Caco-2 (cell line): ENCODE measurements at regions of chr10 and their contacts with region 1.

Region 1: DNA sequence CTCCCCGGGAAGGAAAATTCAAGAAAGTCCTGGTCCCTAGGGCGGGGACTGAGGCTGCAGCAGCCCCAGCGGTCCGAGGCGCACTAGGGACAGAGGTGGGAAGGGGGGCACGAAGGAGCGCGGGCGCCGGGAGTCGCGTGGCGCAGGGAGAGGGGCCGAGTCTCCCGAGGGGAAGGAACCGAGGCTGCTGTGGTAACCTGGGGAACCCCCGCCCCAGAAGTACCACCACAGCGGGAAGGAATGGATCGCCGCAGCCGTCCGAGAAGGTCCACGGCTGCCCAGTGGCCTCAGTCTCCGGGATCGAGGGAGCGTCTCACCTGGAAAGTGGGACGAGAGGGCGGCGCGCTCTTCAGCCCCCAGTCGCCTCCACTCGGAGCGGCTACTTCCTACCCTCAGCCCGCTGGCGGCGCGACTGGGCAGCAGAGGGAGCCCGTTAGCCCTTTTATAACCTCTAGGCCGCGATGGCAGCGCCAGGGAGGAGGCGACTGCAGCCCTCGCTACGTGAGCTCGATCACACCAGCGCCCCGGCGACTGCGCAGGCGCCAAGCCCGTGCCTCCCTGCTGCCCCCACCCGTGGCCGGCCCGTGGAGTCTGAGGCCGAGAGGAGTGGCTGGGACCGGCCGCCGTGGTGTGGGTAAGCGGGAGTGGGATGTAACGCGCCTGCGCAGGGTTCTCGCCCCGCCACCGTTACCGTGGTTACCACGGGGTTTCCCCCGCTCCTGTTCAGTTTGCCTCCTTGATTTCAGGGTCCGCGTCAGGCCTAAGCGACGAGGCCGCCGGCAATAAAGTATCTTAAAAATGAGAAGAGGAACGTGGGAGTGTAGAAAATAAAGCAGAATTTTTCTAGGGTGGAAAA is at the start of gene P4HA1:
- DNase-seq: peak; percentile 99
- H3K4me3 ChIP-seq: peak within 1 kb of the TSS; percentile 70
- H3K4me3 Mint-ChIP-seq: peak within 1 kb of the TSS; percentile 98
- H3K27ac Mint-ChIP-seq: peak within 1 kb of the TSS; percentile 96
- H3K4me1 ChIP-seq: peaks cover 16% of the 10 kb centered on the region; the same call in 1 of the 2 replicates
- H3K4me1 Mint-ChIP-seq: peaks cover 14% of the 10 kb centered on the region
- H3K27me3 ChIP-seq: no peaks in the 10 kb centered on the region
- H3K27me3 Mint-ChIP-seq: no peaks in the 10 kb centered on the region
- CTCF ChIP-seq: peak; percentile 47 to 91
- total RNA-seq, gene P4HA1: 44.3 and 46.5 TPM in 2 replicates

Region 2: GRCh38 chr10:72997099-72997498 is 99.6 kb before region 1 on chr10:
- CTCF ChIA-PET with region 1: no interaction called
- POLR2A ChIA-PET with region 1: no interaction called
- intact Hi-C with region 1: no loop called
- DNase-seq: no peak
- H3K4me3 ChIP-seq: no peak overlapping the region
- H3K4me3 Mint-ChIP-seq: no peak overlapping the region
- H3K27ac Mint-ChIP-seq: no peak overlapping the region
- H3K4me1 ChIP-seq: no peaks in the 10 kb centered on the region
- H3K4me1 Mint-ChIP-seq: no peaks in the 10 kb centered on the region
- H3K27me3 ChIP-seq: no peaks in the 10 kb centered on the region
- H3K27me3 Mint-ChIP-seq: no peaks in the 10 kb centered on the region
- CTCF ChIP-seq: no peak

Region 3: DNA sequence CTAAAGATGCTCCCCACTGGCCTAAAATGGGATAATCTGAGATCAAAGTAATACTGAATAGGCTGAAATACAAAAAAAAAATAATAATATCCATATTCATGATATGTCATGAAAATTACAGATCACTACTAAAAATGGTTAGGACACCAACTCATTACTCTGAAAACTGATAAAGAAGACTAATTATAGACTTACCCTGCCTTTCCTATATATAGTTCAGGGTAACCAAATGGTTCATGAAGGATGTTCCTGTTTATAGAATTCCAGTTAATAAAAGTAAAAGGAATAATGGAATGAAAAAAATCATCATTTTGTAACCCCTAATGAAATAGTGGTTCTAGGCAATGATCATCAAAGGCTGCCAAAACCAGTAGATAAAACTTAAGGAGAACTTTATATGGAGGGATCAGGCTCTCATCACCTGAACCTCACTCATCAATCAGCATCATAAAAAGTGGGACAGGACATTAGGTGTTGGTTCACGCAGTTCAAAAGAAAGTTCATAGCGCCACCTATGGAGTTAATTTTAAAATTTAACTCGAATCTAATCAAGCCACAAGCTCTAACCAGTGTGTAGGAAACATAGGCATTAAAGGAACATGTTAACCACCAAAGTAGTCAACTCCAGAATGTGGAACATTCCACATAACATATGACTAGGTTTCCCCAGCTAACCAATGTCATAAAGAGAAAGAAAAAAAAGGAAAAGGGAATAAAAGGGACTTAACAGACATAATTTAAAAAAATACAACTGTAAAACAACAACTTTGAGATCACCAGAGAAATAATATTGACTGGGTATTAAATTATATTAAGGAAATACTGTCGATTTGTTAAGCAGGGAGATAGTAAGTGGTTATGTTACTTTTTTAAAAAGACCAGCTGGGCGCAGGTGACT is 35.7 kb before region 1 on chr10:
- CTCF ChIA-PET with region 1: interaction called, 3 read pairs
- POLR2A ChIA-PET with region 1: interaction called, 12 read pairs
- intact Hi-C with region 1: no loop called
- DNase-seq: peak in 1 of 2 experiments; percentile 60
- H3K4me3 ChIP-seq: no peak overlapping the region
- H3K4me3 Mint-ChIP-seq: no peak overlapping the region
- H3K27ac Mint-ChIP-seq: no peak overlapping the region
- H3K4me1 ChIP-seq: no peaks in the 10 kb centered on the region
- H3K4me1 Mint-ChIP-seq: no peaks in the 10 kb centered on the region
- H3K27me3 ChIP-seq: no peaks in the 10 kb centered on the region
- H3K27me3 Mint-ChIP-seq: no peaks in the 10 kb centered on the region
- CTCF ChIP-seq: peak; percentile 38 to 71

Region 4: GRCh38 chr10:73110345-73110849 is 13.7 kb after region 1 on chr10 and contains the start of gene NUDT13:
- CTCF ChIA-PET with region 1: interaction called, 40 read pairs
- POLR2A ChIA-PET with region 1: interaction called, 43 read pairs
- intact Hi-C with region 1: loop called (anchors 1 kb)
- DNase-seq: peak; percentile 84 to 86
- H3K4me3 ChIP-seq: peak within 1 kb of the TSS; percentile 52
- H3K4me3 Mint-ChIP-seq: peak within 1 kb of the TSS; percentile 85
- H3K27ac Mint-ChIP-seq: peak within 1 kb of the TSS; percentile 90
- H3K4me1 ChIP-seq: peaks cover 11% of the 10 kb centered on the region
- H3K4me1 Mint-ChIP-seq: no peaks in the 10 kb centered on the region
- H3K27me3 ChIP-seq: no peaks in the 10 kb centered on the region
- H3K27me3 Mint-ChIP-seq: no peaks in the 10 kb centered on the region
- CTCF ChIP-seq: no peak
- total RNA-seq, gene NUDT13: 6.5 and 7.1 TPM in 2 replicates

Region 5: DNA sequence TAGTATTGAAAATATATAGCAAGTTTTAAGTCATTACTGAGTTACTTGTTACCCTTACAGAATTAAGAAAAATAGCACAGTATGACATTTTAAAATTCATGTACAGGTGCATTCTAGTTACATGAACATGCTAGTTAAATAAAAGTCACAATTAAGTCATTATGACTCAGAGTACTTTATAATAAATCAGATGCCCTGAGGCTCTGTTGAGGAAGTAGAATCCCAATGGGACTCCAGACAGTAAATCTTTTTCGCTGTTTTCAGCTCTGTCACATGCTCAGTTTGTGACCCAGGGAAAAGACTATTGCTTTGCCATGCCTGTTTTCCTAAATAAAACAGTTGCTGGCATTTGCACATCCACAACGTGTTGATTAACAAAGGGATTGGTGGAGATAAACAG is 34.6 kb after region 1 on chr10:
- CTCF ChIA-PET with region 1: interaction called, 4 read pairs
- POLR2A ChIA-PET with region 1: interaction called, 8 read pairs
- intact Hi-C with region 1: loop called (anchors 1 kb)
- DNase-seq: no peak
- H3K4me3 ChIP-seq: no peak overlapping the region
- H3K4me3 Mint-ChIP-seq: no peak overlapping the region
- H3K27ac Mint-ChIP-seq: no peak overlapping the region
- H3K4me1 ChIP-seq: peaks cover 32% of the 10 kb centered on the region
- H3K4me1 Mint-ChIP-seq: peaks cover 20% of the 10 kb centered on the region
- H3K27me3 ChIP-seq: no peaks in the 10 kb centered on the region
- H3K27me3 Mint-ChIP-seq: no peaks in the 10 kb centered on the region
- CTCF ChIP-seq: no peak

Region 6: GRCh38 chr10:73167783-73168464 is 71.2 kb after region 1 on chr10 and contains the starts of genes ECD and FAM149B1:
- CTCF ChIA-PET with region 1: interaction called, 20 read pairs
- POLR2A ChIA-PET with region 1: interaction called, 20 read pairs
- intact Hi-C with region 1: loop called (anchors 2 kb)
- DNase-seq: peak; percentile 98 to 99
- H3K4me3 ChIP-seq: peak within 1 kb of the TSS; percentile 82
- H3K4me3 Mint-ChIP-seq: peak within 1 kb of the TSS; percentile 94
- H3K27ac Mint-ChIP-seq: peak within 1 kb of the TSS; percentile 98
- H3K4me1 ChIP-seq: peaks cover 10% of the 10 kb centered on the region; the same call in 1 of the 2 replicates
- H3K4me1 Mint-ChIP-seq: peaks cover 14% of the 10 kb centered on the region
- H3K27me3 ChIP-seq: no peaks in the 10 kb centered on the region
- H3K27me3 Mint-ChIP-seq: no peaks in the 10 kb centered on the region
- CTCF ChIP-seq: peak; percentile 55 to 65
- total RNA-seq, gene ECD: 51.8 and 52.6 TPM in 2 replicates
- total RNA-seq, gene FAM149B1: 13.2 and 14.1 TPM in 2 replicates

Region 7: DNA sequence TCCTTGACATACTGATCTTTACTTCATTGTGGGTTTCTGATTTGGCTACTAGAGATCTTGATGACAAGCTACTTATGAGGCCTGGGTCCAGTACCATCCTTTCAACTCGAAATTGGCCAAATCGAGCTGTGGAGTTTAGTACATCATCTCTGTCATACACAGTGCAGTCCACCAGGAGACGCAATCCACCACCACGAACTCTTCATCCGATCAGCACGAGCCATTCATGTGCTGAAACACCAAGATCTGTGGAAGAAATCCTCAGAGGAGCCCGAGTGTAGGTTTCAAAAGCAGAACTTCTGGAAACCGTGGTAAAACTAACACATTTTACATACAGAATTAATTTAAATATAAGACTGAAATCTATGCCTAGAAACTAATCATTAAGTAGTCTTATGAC is 136.2 kb after region 1 on chr10:
- CTCF ChIA-PET with region 1: interaction called, 10 read pairs
- POLR2A ChIA-PET with region 1: no interaction called
- intact Hi-C with region 1: no loop called
- DNase-seq: peak in 1 of 2 experiments; percentile 19
- H3K4me3 ChIP-seq: no peak overlapping the region
- H3K4me3 Mint-ChIP-seq: no peak overlapping the region
- H3K27ac Mint-ChIP-seq: no peak overlapping the region
- H3K4me1 ChIP-seq: no peaks in the 10 kb centered on the region
- H3K4me1 Mint-ChIP-seq: no peaks in the 10 kb centered on the region
- H3K27me3 ChIP-seq: no peaks in the 10 kb centered on the region
- H3K27me3 Mint-ChIP-seq: no peaks in the 10 kb centered on the region
- CTCF ChIP-seq: peak; percentile 16 to 43

Region 8: GRCh38 chr10:73287441-73287840 is 190.8 kb after region 1 on chr10:
- CTCF ChIA-PET with region 1: no interaction called
- POLR2A ChIA-PET with region 1: interaction called, 11 read pairs
- intact Hi-C with region 1: no loop called
- DNase-seq: no peak
- H3K4me3 ChIP-seq: no peak overlapping the region
- H3K4me3 Mint-ChIP-seq: no peak overlapping the region
- H3K27ac Mint-ChIP-seq: no peak overlapping the region
- H3K4me1 ChIP-seq: no peaks in the 10 kb centered on the region
- H3K4me1 Mint-ChIP-seq: no peaks in the 10 kb centered on the region
- H3K27me3 ChIP-seq: no peaks in the 10 kb centered on the region; the same call in 1 of the 2 replicates
- H3K27me3 Mint-ChIP-seq: peaks cover 4% of the 10 kb centered on the region
- CTCF ChIP-seq: no peak